GM10248 (cell line): ENCODE measurements at regions of chr10 and their contacts with region 1.

Region 1: GRCh38 chr10:110671788-110672579 is 27.8 kb downstream of the RBM20 start:
- DNase-seq: peak; percentile 89
- CTCF ChIP-seq: peak; percentile 90

Region 2: DNA sequence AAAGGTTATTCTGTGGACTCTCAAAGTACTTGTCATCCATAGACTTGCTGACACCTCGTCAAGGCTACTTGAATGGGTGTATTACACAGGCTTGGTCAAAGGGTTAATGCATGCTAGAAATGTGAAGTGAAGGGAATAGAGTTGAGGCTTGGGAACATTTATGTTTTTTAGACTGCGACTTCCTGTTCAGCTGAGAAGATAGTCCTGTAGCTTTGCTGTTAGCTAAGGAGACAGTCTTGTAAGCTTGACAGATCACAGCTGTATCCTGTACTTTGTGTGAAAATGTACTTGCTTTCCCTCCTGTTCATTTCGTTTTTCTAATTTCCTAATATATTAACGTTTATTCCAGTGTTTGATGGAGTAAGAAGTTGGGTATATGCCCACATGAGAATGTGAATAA is 612.1 kb before region 1 on chr10:
- CTCF ChIA-PET with region 1: no interaction called
- POLR2A ChIA-PET with region 1: no interaction called
- DNase-seq: no peak
- CTCF ChIP-seq: no peak

Region 3: DNA sequence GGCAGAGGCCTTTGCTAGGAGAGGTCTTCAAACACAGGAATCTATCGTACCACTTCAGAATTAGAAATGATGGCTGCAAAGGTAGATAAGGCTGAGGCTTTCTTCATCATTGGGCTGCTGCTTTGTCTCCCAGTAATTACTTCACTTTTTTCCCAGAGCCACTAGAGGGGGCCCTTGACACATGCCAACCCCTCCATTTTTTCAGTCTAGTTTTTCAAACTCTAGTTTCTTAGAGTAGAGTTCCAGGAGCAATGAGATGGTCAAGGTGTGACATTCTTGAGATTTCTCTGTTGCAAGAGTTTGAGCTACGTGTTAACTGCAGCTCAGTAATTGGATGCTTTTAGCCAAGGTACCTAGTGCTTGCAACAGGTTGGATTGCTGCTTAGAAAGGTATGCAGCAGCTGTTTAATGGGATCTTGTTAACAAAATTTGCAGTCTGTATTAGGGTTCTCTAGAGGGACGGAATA is 61.6 kb before region 1 on chr10:
- CTCF ChIA-PET with region 1: interaction called, 40 read pairs
- POLR2A ChIA-PET with region 1: no interaction called
- DNase-seq: peak; percentile 61
- CTCF ChIP-seq: peak; percentile 69

Region 4: GRCh38 chr10:110617425-110618229 is 54.4 kb before region 1 on chr10:
- CTCF ChIA-PET with region 1: interaction called, 40 read pairs
- POLR2A ChIA-PET with region 1: no interaction called
- DNase-seq: no peak
- CTCF ChIP-seq: no peak

Region 5: DNA sequence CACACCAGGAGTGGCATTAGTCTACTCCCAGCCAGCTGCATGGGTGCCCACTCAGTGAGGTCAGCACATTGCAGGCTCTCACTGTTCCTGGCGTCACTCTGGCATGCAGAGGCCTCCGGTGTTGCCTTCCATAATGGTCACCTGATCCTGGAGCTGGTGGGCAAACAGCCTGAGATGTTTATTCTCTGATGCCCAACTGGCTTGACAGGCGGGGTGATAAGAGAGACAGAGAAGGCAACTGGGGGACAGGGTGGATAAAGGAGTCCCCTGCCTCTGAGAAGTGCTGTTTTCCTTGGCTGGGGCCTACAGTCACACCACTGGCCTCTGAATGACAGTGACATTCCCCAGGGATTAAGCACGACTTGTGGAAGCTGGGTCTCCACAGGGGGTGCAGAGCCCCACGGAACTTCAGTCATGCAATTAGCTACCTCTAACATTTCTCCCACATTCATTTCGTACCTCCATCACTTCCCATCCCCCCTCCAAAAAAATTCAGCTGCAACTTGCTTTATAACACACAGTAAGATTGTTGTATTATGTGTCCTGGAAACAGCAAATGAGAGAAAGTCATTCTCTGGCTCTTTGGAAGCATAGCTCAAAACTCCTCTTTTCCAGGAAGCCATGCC is 34.9 kb before region 1 on chr10:
- CTCF ChIA-PET with region 1: interaction called, 13 read pairs
- POLR2A ChIA-PET with region 1: no interaction called
- DNase-seq: no peak
- CTCF ChIP-seq: no peak

Region 6: GRCh38 chr10:110651044-110651958 is 20.7 kb before region 1 on chr10:
- CTCF ChIA-PET with region 1: interaction called, 27 read pairs
- POLR2A ChIA-PET with region 1: no interaction called
- DNase-seq: peak; percentile 25
- CTCF ChIP-seq: no peak

Region 7: GRCh38 chr10:110657968-110658691 is 13.9 kb before region 1 on chr10:
- CTCF ChIA-PET with region 1: interaction called, 52 read pairs
- POLR2A ChIA-PET with region 1: no interaction called
- DNase-seq: no peak
- CTCF ChIP-seq: no peak

Region 8: GRCh38 chr10:110706690-110707098 is 34.7 kb after region 1 on chr10:
- CTCF ChIA-PET with region 1: interaction called, 31 read pairs
- POLR2A ChIA-PET with region 1: interaction called, 3 read pairs
- DNase-seq: no peak
- CTCF ChIP-seq: no peak